ENCODE measurements at regions of chr13 and their contacts with region 1.

Region 1: DNA sequence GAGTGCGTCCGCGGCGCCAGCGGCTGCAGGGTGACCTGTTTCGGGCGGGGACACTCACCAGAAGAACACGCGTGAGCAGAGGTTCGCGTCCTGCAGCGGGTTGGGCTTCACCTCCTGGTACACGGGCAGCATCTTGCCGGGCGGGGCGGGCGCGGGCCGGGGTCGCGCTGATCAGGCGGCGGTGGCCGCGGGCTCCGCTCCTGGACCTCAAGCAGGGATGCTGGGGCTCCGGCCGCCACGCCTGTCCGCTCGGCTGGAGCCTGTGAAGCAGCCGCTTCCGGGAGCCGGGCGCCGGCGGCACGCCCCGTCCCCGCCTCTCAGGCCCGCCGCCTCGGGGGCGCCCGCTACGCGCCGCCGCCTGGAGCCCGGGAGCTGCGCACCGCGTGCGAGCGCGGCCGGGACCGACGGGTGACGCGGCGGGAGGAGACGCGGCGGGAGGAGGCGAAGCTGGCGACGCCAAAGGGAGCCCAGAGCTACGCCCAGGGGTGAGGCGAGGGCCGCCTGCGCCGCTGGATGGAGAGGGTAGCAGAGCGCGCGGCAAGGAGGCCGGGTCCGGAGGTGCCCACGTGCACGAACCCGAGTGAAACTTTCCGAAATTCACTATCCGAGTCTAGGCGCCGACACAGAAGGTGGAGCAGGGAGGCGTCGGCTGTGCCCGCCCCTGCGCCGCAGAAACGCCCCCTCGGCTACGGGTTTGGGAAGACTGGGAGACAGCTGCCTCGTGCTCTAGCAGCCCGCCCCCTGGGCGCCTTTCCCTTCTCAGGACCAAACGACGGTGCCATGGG is at the start of gene ABCC4:
- DNase-seq: peak; percentile 25 to 82
- H3K4me3 ChIP-seq: peak within 1 kb of the TSS; percentile 56 to 92 (median 64)
- H3K27ac ChIP-seq: no peak within 1 kb of the TSS
- H3K4me1 ChIP-seq: peaks cover 0 to 4% (median 0%) of the 10 kb centered on the region in 4 experiments; a peak in 3 of 7 replicates
- H3K27me3 ChIP-seq: peaks cover 4 to 27% (median 20%) of the 10 kb centered on the region in 4 experiments
- CTCF ChIP-seq: no peak
- EP300 ChIP-seq: no peak
- POLR2A ChIP-seq: no peak; a peak in 1 of 3 replicates
- RAD21 ChIP-seq: no peak
- total RNA-seq, gene ABCC4: 14.1 TPM in 2 replicates

Region 2: GRCh38 chr13:95164830-95165229 is 136.5 kb before region 1 on chr13:
- CTCF ChIA-PET with region 1: no interaction called
- POLR2A ChIA-PET with region 1: no interaction called
- DNase-seq: no peak
- H3K4me3 ChIP-seq: no peak overlapping the region
- H3K27ac ChIP-seq: no peak overlapping the region
- H3K4me1 ChIP-seq: no peaks in the 10 kb centered on the region
- H3K27me3 ChIP-seq: no peaks in the 10 kb centered on the region
- CTCF ChIP-seq: no peak
- EP300 ChIP-seq: no peak
- POLR2A ChIP-seq: no peak
- RAD21 ChIP-seq: no peak

Region 3: GRCh38 chr13:95234242-95234641 is 67.1 kb before region 1 on chr13:
- CTCF ChIA-PET with region 1: no interaction called
- POLR2A ChIA-PET with region 1: no interaction called
- DNase-seq: no peak
- H3K4me3 ChIP-seq: no peak overlapping the region
- H3K27ac ChIP-seq: no peak overlapping the region
- H3K4me1 ChIP-seq: no peaks in the 10 kb centered on the region
- H3K27me3 ChIP-seq: no peaks in the 10 kb centered on the region
- CTCF ChIP-seq: no peak
- EP300 ChIP-seq: no peak
- POLR2A ChIP-seq: no peak
- RAD21 ChIP-seq: no peak

Region 4: GRCh38 chr13:95289020-95289444 is 12.3 kb before region 1 on chr13:
- CTCF ChIA-PET with region 1: interaction called, 42 read pairs
- POLR2A ChIA-PET with region 1: interaction called, 3 read pairs
- DNase-seq: no peak
- H3K4me3 ChIP-seq: no peak overlapping the region
- H3K27ac ChIP-seq: no peak overlapping the region
- H3K4me1 ChIP-seq: no peaks in the 10 kb centered on the region
- H3K27me3 ChIP-seq: no peaks in the 10 kb centered on the region
- CTCF ChIP-seq: no peak
- EP300 ChIP-seq: no peak
- POLR2A ChIP-seq: no peak
- RAD21 ChIP-seq: no peak

Region 5: DNA sequence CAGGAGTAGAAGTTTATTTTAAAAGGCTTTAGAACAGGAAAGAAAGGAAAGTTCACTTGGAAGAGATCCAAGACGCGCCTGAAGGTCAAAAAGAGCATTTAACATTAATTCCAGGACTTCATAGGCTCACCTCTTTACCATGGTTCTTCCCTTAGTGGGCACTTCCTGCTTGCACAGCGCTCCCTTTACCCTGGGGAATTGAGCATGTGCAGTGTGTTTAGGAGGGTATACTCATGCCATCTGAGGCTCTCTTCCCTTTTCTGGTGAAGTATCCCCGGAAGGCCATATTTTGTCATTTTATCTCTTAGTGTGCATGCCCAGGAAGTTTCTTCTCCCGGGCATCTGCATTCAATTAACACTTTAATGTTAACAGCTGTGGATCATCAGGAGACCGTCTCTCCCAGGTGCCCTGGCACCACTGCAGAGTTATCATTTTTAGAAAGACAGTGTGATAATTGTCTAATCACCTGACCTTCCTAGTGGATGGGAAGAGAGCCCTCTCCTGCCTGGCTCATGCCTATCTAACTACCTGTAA is 66.0 kb after region 1 on chr13:
- CTCF ChIA-PET with region 1: interaction called, 12 read pairs
- POLR2A ChIA-PET with region 1: no interaction called
- DNase-seq: no peak
- H3K4me3 ChIP-seq: no peak overlapping the region
- H3K27ac ChIP-seq: no peak overlapping the region
- H3K4me1 ChIP-seq: no peaks in the 10 kb centered on the region
- H3K27me3 ChIP-seq: no peaks in the 10 kb centered on the region
- CTCF ChIP-seq: no peak
- EP300 ChIP-seq: no peak
- POLR2A ChIP-seq: no peak
- RAD21 ChIP-seq: no peak

Region 6: DNA sequence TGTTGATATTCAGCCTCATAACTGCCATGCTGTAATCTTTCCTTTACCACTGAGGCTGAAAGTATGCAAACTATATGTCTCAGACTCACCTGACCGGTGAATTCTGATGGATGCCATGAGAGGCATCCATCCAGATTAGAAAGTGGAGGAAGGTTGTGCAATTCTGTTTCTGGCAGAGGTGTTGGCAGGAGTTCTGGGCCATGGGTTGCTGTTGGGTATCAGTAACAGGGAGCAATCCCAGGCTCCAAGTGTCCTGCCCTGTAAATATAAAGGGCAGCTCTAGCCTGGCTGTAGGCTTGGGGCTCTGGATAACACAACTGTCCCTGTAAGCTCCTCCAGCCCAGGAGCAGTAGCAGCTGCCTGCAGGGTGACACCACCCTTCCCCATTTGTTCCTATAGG is 77.2 kb after region 1 on chr13:
- CTCF ChIA-PET with region 1: interaction called, 113 read pairs
- POLR2A ChIA-PET with region 1: interaction called, 3 read pairs
- DNase-seq: no peak
- H3K4me3 ChIP-seq: no peak overlapping the region
- H3K27ac ChIP-seq: no peak overlapping the region
- H3K4me1 ChIP-seq: peaks cover 0 to 6% (median 0%) of the 10 kb centered on the region in 4 experiments; a peak in 1 of 7 replicates
- H3K27me3 ChIP-seq: no peaks in the 10 kb centered on the region
- CTCF ChIP-seq: no peak
- EP300 ChIP-seq: no peak
- POLR2A ChIP-seq: no peak
- RAD21 ChIP-seq: no peak

Region 7: DNA sequence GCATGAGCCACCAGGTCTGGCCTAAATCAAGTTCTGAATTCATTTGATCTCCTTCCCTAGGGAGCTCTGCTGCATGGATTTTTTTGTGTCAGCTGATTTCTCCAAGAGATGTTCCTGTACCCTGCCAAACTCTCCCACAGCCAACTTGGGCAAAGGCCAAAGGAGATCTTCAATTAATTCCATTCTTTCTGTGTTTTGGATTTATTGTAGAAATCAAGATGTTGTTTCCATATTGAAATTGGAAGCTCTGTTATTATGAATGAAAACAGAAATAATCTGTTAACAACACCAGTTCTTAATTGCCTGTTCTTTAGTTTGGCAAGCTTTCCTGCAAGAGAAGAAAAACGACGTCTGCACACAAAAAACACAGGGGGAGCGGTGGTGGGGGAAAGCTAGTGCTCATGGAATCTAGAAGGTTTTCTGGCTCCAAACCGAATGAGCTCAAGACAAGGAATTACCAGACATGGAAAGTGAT is 86.4 kb after region 1 on chr13:
- CTCF ChIA-PET with region 1: interaction called, 113 read pairs
- POLR2A ChIA-PET with region 1: no interaction called
- DNase-seq: no peak
- H3K4me3 ChIP-seq: no peak overlapping the region
- H3K27ac ChIP-seq: no peak overlapping the region
- H3K4me1 ChIP-seq: no peaks in the 10 kb centered on the region
- H3K27me3 ChIP-seq: no peaks in the 10 kb centered on the region
- CTCF ChIP-seq: no peak
- EP300 ChIP-seq: no peak
- POLR2A ChIP-seq: no peak
- RAD21 ChIP-seq: no peak

Region 8: GRCh38 chr13:95480131-95480545 is 178.8 kb after region 1 on chr13:
- CTCF ChIA-PET with region 1: interaction called, 11 read pairs
- POLR2A ChIA-PET with region 1: no interaction called
- DNase-seq: no peak
- H3K4me3 ChIP-seq: no peak overlapping the region
- H3K27ac ChIP-seq: no peak overlapping the region
- H3K4me1 ChIP-seq: no peaks in the 10 kb centered on the region; a peak in 1 of 7 replicates
- H3K27me3 ChIP-seq: peaks cover 0 to 2% (median 0%) of the 10 kb centered on the region in 4 experiments; a peak in 3 of 7 replicates
- CTCF ChIP-seq: no peak
- EP300 ChIP-seq: no peak
- POLR2A ChIP-seq: no peak
- RAD21 ChIP-seq: no peak